Lower leg skin (tissue), 4 donors: ENCODE measurements at regions of chr16 and their contacts with region 1.

Region 1: GRCh38 chr16:1048442-1049112 is 24.0 kb upstream of the SSTR5 start:
- DNase-seq: no peak
- H3K4me3 ChIP-seq: no peak overlapping the region
- CTCF ChIP-seq: no peak
- POLR2A ChIP-seq: no peak

Region 2: GRCh38 chr16:947255-947921 is 101.2 kb before region 1 on chr16:
- intact Hi-C with region 1: loop called (anchors 10 kb)
- DNase-seq: no peak
- H3K4me3 ChIP-seq: no peak overlapping the region
- CTCF ChIP-seq: no peak
- POLR2A ChIP-seq: no peak